Common myeloid progenitor, CD34-positive (primary cell): ENCODE measurements at regions of chr6 and their contacts with region 1.

Region 1: DNA sequence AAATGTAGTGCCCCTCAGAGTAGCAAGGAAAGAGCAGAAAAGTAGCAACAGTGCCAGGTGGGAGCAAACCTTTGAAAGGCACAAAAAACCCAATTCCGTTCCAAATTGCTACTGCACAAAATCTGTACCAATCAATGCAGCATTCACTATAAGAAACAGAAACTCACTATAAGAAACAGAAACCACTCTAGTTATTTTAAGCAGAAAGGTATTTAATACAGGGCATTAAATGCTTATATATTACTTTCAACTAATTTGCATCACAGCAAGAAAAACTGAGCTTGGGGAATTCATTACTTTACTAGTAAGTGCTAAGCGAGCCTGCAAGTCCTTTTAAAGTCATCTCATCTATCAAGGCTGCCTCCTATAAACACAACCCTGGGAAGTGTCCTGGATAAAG is 116.5 kb upstream of the OLIG3 start:
- DNase-seq: no peak
- H3K4me3 ChIP-seq: no peak overlapping the region
- H3K27ac ChIP-seq: no peak overlapping the region
- H3K4me1 ChIP-seq: no peaks in the 10 kb centered on the region
- H3K27me3 ChIP-seq: peaks cover 0 to 7% (median 0%) of the 10 kb centered on the region in 5 experiments

Region 2: GRCh38 chr6:138031850-138032249 is 421.1 kb after region 1 on chr6:
- CTCF ChIA-PET with region 1: no interaction called
- POLR2A ChIA-PET with region 1: interaction called, 10 read pairs
- DNase-seq: no peak
- H3K4me3 ChIP-seq: no peak overlapping the region
- H3K27ac ChIP-seq: no peak overlapping the region
- H3K4me1 ChIP-seq: no peaks in the 10 kb centered on the region
- H3K27me3 ChIP-seq: no peaks in the 10 kb centered on the region